ENCODE measurements at regions of chr3 and their contacts with region 1.

Region 1: GRCh38 chr3:71208211-71209108 is 375.1 kb downstream of the FOXP1 start:
- DNase-seq: peak; percentile 84 to 88
- H3K4me3 ChIP-seq: no peak overlapping the region
- H3K4me3 Mint-ChIP-seq: peak overlapping the region; percentile 66
- H3K27ac Mint-ChIP-seq: peak overlapping the region; percentile 93
- H3K4me1 ChIP-seq: peaks cover 60% of the 10 kb centered on the region
- H3K4me1 Mint-ChIP-seq: peaks cover 54% of the 10 kb centered on the region
- H3K27me3 ChIP-seq: no peaks in the 10 kb centered on the region
- H3K27me3 Mint-ChIP-seq: no peaks in the 10 kb centered on the region
- CTCF ChIP-seq: no peak

Region 2: DNA sequence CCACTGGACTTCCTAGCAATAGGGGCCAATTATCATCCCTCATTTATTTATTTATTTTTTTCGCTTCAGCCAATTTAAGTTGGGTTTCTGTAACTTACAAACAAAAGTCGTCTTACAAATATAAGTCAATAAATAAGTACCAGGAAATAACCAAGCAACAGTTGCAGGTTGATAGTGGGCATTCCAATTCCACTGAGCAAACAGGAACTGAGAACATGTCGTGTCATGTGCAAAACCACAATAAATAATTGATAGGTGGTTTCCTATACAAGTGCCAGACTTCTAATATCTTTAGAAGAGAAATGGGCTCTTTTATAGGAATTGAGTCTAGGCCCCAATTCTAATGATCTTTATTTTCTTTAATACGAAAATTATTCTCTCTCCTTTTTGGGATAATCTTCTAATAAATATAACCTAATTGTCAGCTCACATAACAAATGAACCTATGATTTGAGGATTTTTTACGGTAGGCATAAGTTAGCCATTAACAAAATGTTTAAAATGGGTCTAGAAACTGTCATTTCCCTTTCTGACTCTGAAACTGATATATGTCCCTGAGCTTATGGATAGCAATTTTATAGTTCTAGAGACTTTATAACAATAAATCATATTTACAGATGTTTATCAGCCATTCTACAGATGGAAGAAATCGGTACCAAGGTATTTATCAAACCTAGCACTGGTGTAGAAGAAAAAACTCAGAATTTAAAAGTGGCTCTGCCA is 196.7 kb before region 1 on chr3:
- CTCF ChIA-PET with region 1: no interaction called
- POLR2A ChIA-PET with region 1: no interaction called
- intact Hi-C with region 1: no loop called
- DNase-seq: no peak
- H3K4me3 ChIP-seq: no peak overlapping the region
- H3K4me3 Mint-ChIP-seq: no peak overlapping the region
- H3K27ac Mint-ChIP-seq: no peak overlapping the region
- H3K4me1 ChIP-seq: peaks cover 15% of the 10 kb centered on the region
- H3K4me1 Mint-ChIP-seq: peaks cover 6% of the 10 kb centered on the region
- H3K27me3 ChIP-seq: no peaks in the 10 kb centered on the region
- H3K27me3 Mint-ChIP-seq: no peaks in the 10 kb centered on the region
- CTCF ChIP-seq: no peak

Region 3: GRCh38 chr3:71121429-71122167 is 86.9 kb before region 1 on chr3:
- CTCF ChIA-PET with region 1: no interaction called
- POLR2A ChIA-PET with region 1: no interaction called
- intact Hi-C with region 1: loop called (anchors 1 kb)
- DNase-seq: no peak
- H3K4me3 ChIP-seq: no peak overlapping the region
- H3K4me3 Mint-ChIP-seq: no peak overlapping the region
- H3K27ac Mint-ChIP-seq: peak overlapping the region; percentile 71
- H3K4me1 ChIP-seq: peaks cover 57% of the 10 kb centered on the region
- H3K4me1 Mint-ChIP-seq: peaks cover 52% of the 10 kb centered on the region
- H3K27me3 ChIP-seq: no peaks in the 10 kb centered on the region
- H3K27me3 Mint-ChIP-seq: no peaks in the 10 kb centered on the region
- CTCF ChIP-seq: no peak

Region 4: DNA sequence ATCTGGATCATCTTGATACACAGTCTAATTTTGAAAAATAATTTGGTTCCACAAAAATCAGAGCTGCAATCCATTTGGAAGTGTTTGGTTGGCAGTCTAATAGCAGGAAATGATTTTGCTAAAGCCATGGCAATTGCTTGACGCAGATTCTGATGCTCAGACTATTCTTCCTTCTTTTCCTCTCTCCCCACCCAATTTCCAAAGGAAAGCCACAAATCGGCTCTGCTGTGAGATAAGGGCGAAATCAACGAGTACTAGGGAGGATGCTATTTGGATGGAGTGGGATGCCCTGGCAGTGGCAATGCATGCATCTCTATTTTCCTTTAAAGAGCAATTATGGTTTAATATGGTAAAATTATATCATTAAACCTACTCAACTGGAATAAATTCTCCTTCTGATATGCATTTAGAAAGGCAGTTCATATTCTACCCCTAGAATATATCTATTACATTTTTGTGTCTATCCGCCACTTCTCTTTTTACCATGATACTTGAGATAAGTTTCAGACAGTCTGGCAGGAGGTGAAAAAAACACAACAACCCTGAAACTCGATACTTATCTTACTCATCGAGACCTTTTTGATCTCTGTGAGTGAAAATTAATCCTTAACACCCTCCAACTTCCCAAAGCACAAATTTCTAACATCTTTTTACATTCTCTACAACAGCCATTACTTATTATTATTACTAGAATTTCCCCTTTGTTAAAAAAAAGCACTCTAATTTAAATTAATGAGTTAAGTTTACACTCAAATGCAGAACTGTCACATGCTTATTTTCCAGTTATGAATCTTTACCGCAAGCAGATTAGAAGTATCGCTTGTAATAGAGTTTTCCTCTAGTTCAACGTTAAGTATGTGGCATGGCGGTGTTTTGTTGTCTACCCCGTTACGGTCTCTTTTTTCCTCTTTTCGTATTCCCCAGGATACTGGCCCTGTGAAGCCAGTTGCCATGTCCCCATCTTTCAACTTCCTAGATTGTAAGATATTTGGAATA is 58.2 kb before region 1 on chr3:
- CTCF ChIA-PET with region 1: no interaction called
- POLR2A ChIA-PET with region 1: interaction called, 5 read pairs
- intact Hi-C with region 1: loop called (anchors 1 kb)
- DNase-seq: no peak
- H3K4me3 ChIP-seq: no peak overlapping the region
- H3K4me3 Mint-ChIP-seq: no peak overlapping the region
- H3K27ac Mint-ChIP-seq: no peak overlapping the region
- H3K4me1 ChIP-seq: peaks cover 59% of the 10 kb centered on the region
- H3K4me1 Mint-ChIP-seq: peaks cover 49% of the 10 kb centered on the region
- H3K27me3 ChIP-seq: no peaks in the 10 kb centered on the region
- H3K27me3 Mint-ChIP-seq: no peaks in the 10 kb centered on the region
- CTCF ChIP-seq: no peak

Region 5: GRCh38 chr3:71191031-71191482 is 17.4 kb before region 1 on chr3:
- CTCF ChIA-PET with region 1: interaction called, 5 read pairs
- POLR2A ChIA-PET with region 1: interaction called, 12 read pairs
- intact Hi-C with region 1: loop called (anchors 1 kb)
- DNase-seq: peak; percentile 75 to 77
- H3K4me3 ChIP-seq: no peak overlapping the region
- H3K4me3 Mint-ChIP-seq: no peak overlapping the region
- H3K27ac Mint-ChIP-seq: peak overlapping the region; percentile 74
- H3K4me1 ChIP-seq: peaks cover 59% of the 10 kb centered on the region
- H3K4me1 Mint-ChIP-seq: peaks cover 52% of the 10 kb centered on the region
- H3K27me3 ChIP-seq: no peaks in the 10 kb centered on the region
- H3K27me3 Mint-ChIP-seq: no peaks in the 10 kb centered on the region
- CTCF ChIP-seq: peak in 1 of 2 experiments; percentile 5

Region 6: GRCh38 chr3:71305231-71306206 is 97.1 kb after region 1 on chr3:
- CTCF ChIA-PET with region 1: no interaction called
- POLR2A ChIA-PET with region 1: no interaction called
- intact Hi-C with region 1: loop called (anchors 2 kb)
- DNase-seq: peak; percentile 36 to 41
- H3K4me3 ChIP-seq: peak overlapping the region; percentile 47
- H3K4me3 Mint-ChIP-seq: peak overlapping the region; percentile 93
- H3K27ac Mint-ChIP-seq: peak overlapping the region; percentile 91
- H3K4me1 ChIP-seq: peaks cover 26% of the 10 kb centered on the region
- H3K4me1 Mint-ChIP-seq: peaks cover 36% of the 10 kb centered on the region
- H3K27me3 ChIP-seq: no peaks in the 10 kb centered on the region
- H3K27me3 Mint-ChIP-seq: no peaks in the 10 kb centered on the region
- CTCF ChIP-seq: no peak

Region 7: GRCh38 chr3:71453822-71454511 is 245.5 kb after region 1 on chr3:
- CTCF ChIA-PET with region 1: no interaction called
- POLR2A ChIA-PET with region 1: no interaction called
- intact Hi-C with region 1: loop called (anchors 2 kb)
- DNase-seq: peak; percentile 50 to 65
- H3K4me3 ChIP-seq: no peak overlapping the region
- H3K4me3 Mint-ChIP-seq: peak overlapping the region; percentile 64
- H3K27ac Mint-ChIP-seq: peak overlapping the region; percentile 86
- H3K4me1 ChIP-seq: peaks cover 64% of the 10 kb centered on the region
- H3K4me1 Mint-ChIP-seq: peaks cover 53% of the 10 kb centered on the region
- H3K27me3 ChIP-seq: no peaks in the 10 kb centered on the region
- H3K27me3 Mint-ChIP-seq: no peaks in the 10 kb centered on the region
- CTCF ChIP-seq: no peak